Heart right ventricle (tissue), 16 donors: ENCODE measurements at regions of chr11 and their contacts with region 1.

Region 1: GRCh38 chr11:61581030-61581928 is at the start of gene SYT7:
- DNase-seq: peak; percentile 96 to 97
- ATAC-seq: peak; percentile 82 to 93 (median 88)
- H3K4me3 ChIP-seq: peak within 1 kb of the TSS; percentile 43 to 70 (median 61)
- H3K27ac ChIP-seq: peak within 1 kb of the TSS; percentile 54 to 93 (median 82)
- H3K4me1 ChIP-seq: peaks cover 6 to 42% (median 16%) of the 10 kb centered on the region in 9 donors
- H3K27me3 ChIP-seq: peaks cover 0 to 41% (median 0%) of the 10 kb centered on the region in 7 donors
- CTCF ChIP-seq: peak in 4 of 9 donors; percentile 8 to 32 (median 16)
- total RNA-seq, gene SYT7: 11.5 to 26.1 (median 18.7) TPM

Region 2: DNA sequence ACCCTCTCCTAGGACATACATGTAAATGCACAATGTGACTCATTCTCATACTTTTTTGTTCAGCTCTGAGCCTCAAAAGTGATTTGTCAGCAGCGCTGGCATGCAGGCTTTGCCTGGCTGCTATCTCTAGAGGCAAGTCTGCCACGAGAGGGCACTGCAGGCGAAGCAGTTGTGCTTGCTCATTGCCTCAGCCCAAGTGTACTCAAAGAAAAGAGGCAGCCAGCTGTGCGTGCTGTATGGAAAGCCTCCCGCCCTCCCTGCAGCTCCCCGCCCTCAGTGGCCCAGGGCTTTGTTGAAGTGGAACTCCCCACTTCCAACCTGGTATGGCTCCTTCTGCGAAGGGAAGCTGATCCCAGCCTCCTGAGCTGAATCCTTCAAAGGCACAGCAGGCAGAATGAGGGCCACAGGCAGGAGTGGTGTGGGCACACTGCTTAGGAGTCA is 135.0 kb before region 1 on chr11:
- intact Hi-C with region 1: loop called in 1 of 10 experiments (anchors 5 kb)
- DNase-seq: peak; percentile 89 to 90
- ATAC-seq: peak; percentile 75 to 92 (median 84)
- H3K4me3 ChIP-seq: no peak overlapping the region
- H3K27ac ChIP-seq: peak overlapping the region in 7 of 10 donors; percentile 14 to 84 (median 76)
- H3K4me1 ChIP-seq: peaks cover 13 to 46% (median 32%) of the 10 kb centered on the region in 9 donors
- H3K27me3 ChIP-seq: no peaks in the 10 kb centered on the region
- CTCF ChIP-seq: peak; percentile 69 to 91 (median 83)

Region 3: GRCh38 chr11:61532139-61533038 is 48.9 kb before region 1 on chr11:
- intact Hi-C with region 1: loop called in 3 of 10 experiments (anchors 5 kb)
- DNase-seq: no peak
- ATAC-seq: no peak
- H3K4me3 ChIP-seq: no peak overlapping the region
- H3K27ac ChIP-seq: no peak overlapping the region
- H3K4me1 ChIP-seq: peaks cover 0 to 48% (median 13%) of the 10 kb centered on the region in 9 donors
- H3K27me3 ChIP-seq: no peaks in the 10 kb centered on the region
- CTCF ChIP-seq: peak; percentile 53 to 88 (median 79)

Region 4: GRCh38 chr11:61598886-61599868 is 17.9 kb after region 1 on chr11:
- intact Hi-C with region 1: loop called in 1 of 10 experiments (anchors 2 kb)
- DNase-seq: peak; percentile 38 to 51
- ATAC-seq: peak; percentile 13 to 49 (median 34)
- H3K4me3 ChIP-seq: peak overlapping the region in 4 of 10 donors; percentile 9 to 23 (median 14)
- H3K27ac ChIP-seq: peak overlapping the region in 9 of 10 donors; percentile 43 to 73 (median 66)
- H3K4me1 ChIP-seq: peaks cover 16 to 68% (median 37%) of the 10 kb centered on the region in 9 donors
- H3K27me3 ChIP-seq: peaks cover 0 to 4% (median 0%) of the 10 kb centered on the region in 7 donors
- CTCF ChIP-seq: peak in 1 of 9 donors; percentile 11

Region 5: DNA sequence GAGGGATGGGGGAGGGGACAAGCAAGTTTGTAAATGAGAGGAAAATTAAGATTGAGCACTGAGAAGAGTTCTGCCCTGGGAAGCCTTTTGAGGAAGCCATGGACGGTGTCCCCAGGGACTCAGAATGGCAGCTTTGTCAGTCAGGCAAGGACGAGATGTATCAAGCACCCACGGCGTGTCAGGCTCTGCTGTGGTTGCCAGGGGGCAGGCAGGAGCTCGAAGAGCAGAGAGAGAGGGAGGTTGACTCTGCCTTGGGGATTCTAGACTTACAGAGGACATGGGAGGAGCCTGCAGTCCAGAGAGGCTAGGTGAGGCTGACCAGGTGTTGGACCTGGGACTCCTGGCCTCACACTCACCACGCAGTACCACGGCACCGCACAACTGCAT is 28.7 kb after region 1 on chr11:
- intact Hi-C with region 1: no loop called
- DNase-seq: no peak
- ATAC-seq: peak; percentile 26 to 78 (median 64)
- H3K4me3 ChIP-seq: no peak overlapping the region
- H3K27ac ChIP-seq: no peak overlapping the region
- H3K4me1 ChIP-seq: peaks cover 0 to 21% (median 7%) of the 10 kb centered on the region in 9 donors
- H3K27me3 ChIP-seq: peaks cover 0 to 12% (median 0%) of the 10 kb centered on the region in 7 donors
- CTCF ChIP-seq: peak in 6 of 9 donors; percentile 9 to 39 (median 20)

Region 6: GRCh38 chr11:61639816-61640443 is 58.7 kb after region 1 on chr11:
- intact Hi-C with region 1: loop called in 2 of 10 experiments (anchors 10 kb)
- DNase-seq: no peak
- ATAC-seq: no peak
- H3K4me3 ChIP-seq: no peak overlapping the region
- H3K27ac ChIP-seq: no peak overlapping the region
- H3K4me1 ChIP-seq: no peaks in the 10 kb centered on the region
- H3K27me3 ChIP-seq: peaks cover 0 to 10% (median 0%) of the 10 kb centered on the region in 7 donors
- CTCF ChIP-seq: no peak

Region 7: DNA sequence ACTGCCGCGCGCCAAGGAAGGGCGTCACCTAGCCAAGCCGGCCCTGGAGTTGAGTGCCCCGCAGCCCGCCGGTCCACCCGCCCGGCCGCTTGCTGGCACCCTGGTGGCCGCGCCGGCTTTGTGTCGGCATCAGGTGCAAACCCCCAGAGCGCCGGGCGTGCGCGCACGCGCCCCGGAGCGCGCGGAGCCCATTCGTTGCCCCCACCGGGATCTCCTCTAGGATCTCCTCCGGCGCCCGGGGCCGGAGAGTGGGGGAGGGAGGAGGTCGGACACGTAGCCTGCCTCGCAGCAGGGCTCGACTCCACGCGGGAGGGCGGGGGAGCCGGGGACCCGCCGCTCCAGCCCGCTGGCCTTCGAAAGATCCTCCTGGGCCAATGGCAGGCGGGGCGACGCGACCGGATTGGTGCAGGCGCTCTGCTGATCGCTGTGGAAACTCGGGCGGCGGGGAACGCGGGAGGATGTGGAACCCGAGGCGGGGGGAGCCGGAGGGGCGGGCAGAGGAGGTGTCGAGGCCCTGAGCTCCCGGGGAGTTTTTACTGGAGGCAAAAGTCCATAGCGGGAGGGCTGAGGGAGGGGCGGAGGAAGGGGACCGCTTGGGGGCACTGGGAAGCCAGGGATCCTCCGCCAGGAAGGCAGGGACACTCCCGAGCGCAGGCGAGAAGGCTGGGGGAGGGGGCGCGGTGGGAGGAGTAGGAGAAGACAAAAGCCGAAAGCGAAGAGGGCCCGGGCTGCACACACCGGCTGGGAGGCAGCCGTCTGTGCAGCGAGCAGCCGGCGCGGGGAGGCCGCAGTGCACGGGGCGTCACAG is 246.5 kb after region 1 on chr11 and contains the start of gene FADS2:
- intact Hi-C with region 1: no loop called
- DNase-seq: peak; percentile 93 to 94
- ATAC-seq: peak; percentile 84 to 92 (median 88)
- H3K4me3 ChIP-seq: peak within 1 kb of the TSS; percentile 44 to 86 (median 73)
- H3K27ac ChIP-seq: peak within 1 kb of the TSS; percentile 40 to 95 (median 86)
- H3K4me1 ChIP-seq: peaks cover 12 to 57% (median 43%) of the 10 kb centered on the region in 9 donors
- H3K27me3 ChIP-seq: peaks cover 0 to 11% (median 0%) of the 10 kb centered on the region in 7 donors
- CTCF ChIP-seq: peak in 1 of 9 donors; percentile 30
- total RNA-seq, gene FADS2: 15.1 to 37.0 (median 23.5) TPM